ENCODE measurements at regions of chr3 and their contacts with region 1.

Region 1: GRCh38 chr3:88203642-88204055 is 53.9 kb downstream of the C3orf38 start:
- DNase-seq: peak; percentile 57
- CTCF ChIP-seq: peak; percentile 74

Region 2: DNA sequence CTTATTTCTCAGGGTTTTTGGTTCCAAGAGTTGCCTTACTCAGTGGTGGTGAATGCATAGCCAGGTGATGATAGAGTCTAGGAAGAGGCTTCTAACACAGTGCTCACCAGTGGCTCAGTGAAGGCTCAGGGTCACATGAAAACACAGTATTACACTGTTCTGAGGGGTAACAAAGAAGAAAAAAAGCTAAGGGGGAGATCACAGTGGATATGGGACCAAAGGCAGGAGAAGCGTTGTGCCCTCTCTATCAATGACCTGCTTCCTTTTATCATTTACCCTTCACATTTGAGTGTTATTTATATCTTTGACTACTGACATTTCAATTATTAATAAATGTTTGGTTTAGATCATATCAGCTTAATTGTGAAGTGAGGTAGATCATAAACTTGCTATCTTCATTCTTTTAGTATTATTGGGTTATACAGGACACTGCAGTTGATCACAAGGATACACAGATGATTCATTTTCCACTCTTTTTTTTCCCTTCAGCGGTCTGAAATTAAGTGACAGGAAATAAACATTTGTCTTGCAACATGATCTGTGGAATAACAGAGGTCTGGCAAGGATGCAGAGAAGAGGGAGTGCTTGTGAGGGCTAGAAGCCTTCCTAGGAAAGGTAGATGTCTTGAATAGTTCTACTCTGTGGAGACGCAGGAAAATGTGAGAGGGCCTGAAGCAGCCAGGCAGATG is 117.9 kb after region 1 on chr3:
- in situ Hi-C with region 1: no loop called
- DNase-seq: no peak
- CTCF ChIP-seq: no peak

Region 3: GRCh38 chr3:89113903-89114840 is 910.5 kb after region 1 on chr3:
- in situ Hi-C with region 1: loop called (anchors 10 kb)
- DNase-seq: peak; percentile 50
- CTCF ChIP-seq: peak; percentile 66

Region 4: GRCh38 chr3:90091204-90091924 is 1887.7 kb after region 1 on chr3:
- in situ Hi-C with region 1: loop called (anchors 25 kb)
- DNase-seq: no peak
- CTCF ChIP-seq: peak; percentile 27

Region 5: GRCh38 chr3:90184861-90185260 is 1981.2 kb after region 1 on chr3:
- in situ Hi-C with region 1: loop called (anchors 25 kb)
- DNase-seq: no peak
- CTCF ChIP-seq: no peak